Naive thymus-derived CD4-positive, alpha-beta T cell (primary cell): ENCODE measurements at regions of chr1 and their contacts with region 1.

Region 1: GRCh38 chr1:235075188-235075926 is 53.3 kb downstream of the TOMM20 start:
- DNase-seq: peak in 1 of 9 donors; percentile 76
- ATAC-seq: peak; percentile 44
- H3K4me3 ChIP-seq: peak overlapping the region; percentile 31
- H3K4me3 Mint-ChIP-seq: peak overlapping the region in 1 of 10 donors; percentile 65
- H3K27ac ChIP-seq: no peak overlapping the region
- H3K27ac Mint-ChIP-seq: peak overlapping the region in 1 of 9 donors; percentile 90
- H3K4me1 ChIP-seq: peaks cover 0 to 10% of the 10 kb centered on the region in 2 donors
- H3K4me1 Mint-ChIP-seq: peaks cover 0 to 38% (median 6%) of the 10 kb centered on the region in 7 donors
- H3K27me3 ChIP-seq: no peaks in the 10 kb centered on the region
- H3K27me3 Mint-ChIP-seq: no peaks in the 10 kb centered on the region

Region 2: DNA sequence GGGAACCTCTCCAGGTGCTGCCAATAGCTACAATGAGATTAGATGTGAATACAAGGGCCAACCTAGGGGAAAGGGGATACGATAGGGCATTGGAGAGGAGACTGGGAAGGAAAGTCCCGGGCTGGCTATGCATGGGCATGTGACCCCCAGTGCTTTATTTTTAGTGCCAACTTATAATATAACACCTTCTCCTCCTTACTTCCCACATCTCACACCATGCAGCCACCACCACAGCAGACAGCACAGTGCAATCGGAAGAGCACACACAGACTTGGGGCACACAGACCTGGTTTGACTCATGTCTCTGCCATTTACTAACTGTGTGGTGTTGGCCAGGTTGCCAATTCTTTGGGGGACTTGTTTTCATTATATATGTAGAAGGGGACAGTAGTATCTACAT is 32.1 kb before region 1 on chr1:
- CTCF ChIA-PET with region 1: no interaction called
- POLR2A ChIA-PET with region 1: interaction called, 3 read pairs
- intact Hi-C with region 1: loop called in 1 of 2 experiments (anchors 5 kb)
- DNase-seq: no peak
- ATAC-seq: peak; percentile 59
- H3K4me3 ChIP-seq: no peak overlapping the region
- H3K4me3 Mint-ChIP-seq: no peak overlapping the region
- H3K27ac ChIP-seq: no peak overlapping the region
- H3K27ac Mint-ChIP-seq: no peak overlapping the region
- H3K4me1 ChIP-seq: no peaks in the 10 kb centered on the region
- H3K4me1 Mint-ChIP-seq: peaks cover 0 to 44% (median 10%) of the 10 kb centered on the region in 7 donors
- H3K27me3 ChIP-seq: no peaks in the 10 kb centered on the region
- H3K27me3 Mint-ChIP-seq: no peaks in the 10 kb centered on the region